Transverse colon (tissue), 4 donors: ENCODE measurements at regions of chrX and their contacts with region 1.

Region 1: GRCh38 chrX:101799387-101799786 is 132.4 kb downstream of the ZMAT1 start:
- DNase-seq: peak; percentile 83
- H3K4me3 ChIP-seq: no peak overlapping the region
- H3K27ac ChIP-seq: no peak overlapping the region
- H3K4me1 ChIP-seq: peaks cover 0 to 2% (median 0%) of the 10 kb centered on the region in 4 donors
- H3K27me3 ChIP-seq: no peaks in the 10 kb centered on the region
- CTCF ChIP-seq: peak; percentile 58 to 85 (median 69)
- EP300 ChIP-seq: no peak
- POLR2A ChIP-seq: no peak

Region 2: GRCh38 chrX:101370888-101371504 is 428.4 kb before region 1 on chrX:
- in situ Hi-C with region 1: no loop called
- intact Hi-C with region 1: no loop called
- DNase-seq: no peak
- H3K4me3 ChIP-seq: no peak overlapping the region
- H3K27ac ChIP-seq: no peak overlapping the region
- H3K4me1 ChIP-seq: no peaks in the 10 kb centered on the region
- H3K27me3 ChIP-seq: no peaks in the 10 kb centered on the region
- CTCF ChIP-seq: no peak
- EP300 ChIP-seq: no peak
- POLR2A ChIP-seq: no peak

Region 3: GRCh38 chrX:101429934-101430333 is 369.5 kb before region 1 on chrX:
- in situ Hi-C with region 1: loop called in 1 of 4 experiments (anchors 10 kb)
- intact Hi-C with region 1: no loop called
- DNase-seq: no peak
- H3K4me3 ChIP-seq: no peak overlapping the region
- H3K27ac ChIP-seq: no peak overlapping the region
- H3K4me1 ChIP-seq: no peaks in the 10 kb centered on the region
- H3K27me3 ChIP-seq: no peaks in the 10 kb centered on the region
- CTCF ChIP-seq: no peak
- EP300 ChIP-seq: no peak
- POLR2A ChIP-seq: no peak

Region 4: DNA sequence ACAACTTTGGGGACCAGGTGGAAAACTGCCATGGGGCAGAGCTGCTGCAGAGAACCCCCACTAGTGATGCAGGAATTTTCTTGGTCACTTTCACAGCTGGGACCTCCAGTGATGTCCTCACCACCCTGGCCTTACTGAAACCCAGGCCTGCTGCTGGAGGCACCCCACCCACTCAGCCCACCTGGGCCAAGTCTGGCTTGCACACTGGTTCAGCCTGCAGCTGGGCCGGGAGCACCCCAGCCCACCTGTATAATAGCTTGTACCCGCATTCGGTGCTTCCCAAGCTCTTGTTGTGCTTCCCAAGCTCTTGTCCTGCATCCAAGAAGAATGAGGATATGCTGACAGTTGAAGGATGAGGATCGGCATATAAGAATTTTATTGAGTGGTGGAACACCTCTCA is 218.8 kb after region 1 on chrX:
- in situ Hi-C with region 1: no loop called
- intact Hi-C with region 1: loop called (anchors 5 kb)
- DNase-seq: no peak
- H3K4me3 ChIP-seq: no peak overlapping the region
- H3K27ac ChIP-seq: no peak overlapping the region
- H3K4me1 ChIP-seq: no peaks in the 10 kb centered on the region
- H3K27me3 ChIP-seq: no peaks in the 10 kb centered on the region
- CTCF ChIP-seq: no peak
- EP300 ChIP-seq: no peak
- POLR2A ChIP-seq: no peak